CD14-positive monocyte (primary cell): ENCODE measurements at regions of chr19 and their contacts with region 1.

Region 1: DNA sequence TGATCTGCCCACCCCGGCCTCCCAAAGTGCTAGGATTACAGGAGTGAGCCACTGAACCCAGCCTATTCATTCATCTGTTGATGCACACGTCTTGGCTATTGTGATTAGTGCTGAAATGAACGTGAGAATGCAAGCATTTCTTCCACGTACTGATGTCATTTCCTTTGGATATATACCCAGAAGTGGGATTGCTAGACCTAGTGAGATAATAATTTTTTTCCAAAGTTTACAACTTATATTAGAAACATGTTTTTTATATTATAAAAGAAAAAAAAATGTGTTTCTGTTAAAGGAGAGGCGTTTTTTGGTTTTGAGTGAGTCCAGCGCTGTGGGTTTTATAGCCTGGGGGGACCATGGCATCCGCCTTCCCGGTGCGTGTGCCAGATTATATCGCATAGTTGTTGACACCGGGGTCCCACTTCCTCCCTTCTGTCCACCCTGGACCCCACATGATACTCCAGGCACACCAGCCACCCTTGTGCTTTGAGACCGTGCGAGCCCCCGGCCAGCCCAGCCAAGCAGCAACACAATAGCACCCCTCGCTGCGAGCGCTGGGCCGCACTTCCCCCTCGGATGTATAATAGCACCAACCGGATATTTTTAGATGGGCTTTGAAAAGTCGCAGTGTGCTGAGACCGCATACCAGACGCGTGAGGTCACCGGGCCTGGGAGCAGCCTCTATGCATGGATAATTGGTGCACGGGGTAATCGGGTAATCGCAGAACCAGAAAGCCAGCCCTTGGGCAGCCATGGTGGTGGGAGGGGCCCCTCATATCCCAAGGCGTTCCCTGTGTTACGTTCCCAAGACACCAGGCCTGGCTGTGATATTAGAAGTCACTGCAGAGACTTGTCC is 59.6 kb downstream of the MYO9B start:
- DNase-seq: peak; percentile 63 to 69 (median 64)
- H3K4me3 ChIP-seq: peak overlapping the region in 1 of 3 experiments; percentile 20
- H3K4me3 Mint-ChIP-seq: peak overlapping the region; percentile 72 to 82
- H3K27ac ChIP-seq: peak overlapping the region; percentile 55 to 74
- H3K27ac Mint-ChIP-seq: peak overlapping the region; percentile 66 to 96 (median 90)
- H3K4me1 ChIP-seq: peaks cover 23 to 26% of the 10 kb centered on the region in 2 donors
- H3K4me1 Mint-ChIP-seq: peaks cover 47% of the 10 kb centered on the region
- H3K27me3 ChIP-seq: no peaks in the 10 kb centered on the region
- H3K27me3 Mint-ChIP-seq: peaks cover 0 to 1% (median 0%) of the 10 kb centered on the region in 3 donors
- CTCF ChIP-seq: no peak

Region 2: DNA sequence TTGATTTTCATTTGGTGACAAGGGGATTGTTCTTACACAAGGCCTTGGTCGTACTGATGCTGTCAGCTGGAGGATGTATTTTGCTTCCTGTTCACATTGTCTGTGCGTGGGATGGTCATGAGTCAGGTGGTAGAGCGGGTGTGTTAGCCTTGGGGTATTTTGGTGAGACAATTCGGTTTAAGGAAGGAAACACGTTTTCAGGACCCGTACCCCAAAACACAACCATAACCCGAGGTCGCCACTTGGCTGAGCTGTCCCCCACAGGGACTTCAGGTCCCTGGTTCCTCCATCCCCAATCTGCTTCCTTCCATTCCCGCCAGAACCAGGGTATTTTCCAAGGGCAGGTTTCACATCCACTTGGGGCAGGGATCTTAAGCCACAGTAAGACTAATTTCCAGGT is 44.6 kb before region 1 on chr19:
- intact Hi-C with region 1: loop called in 1 of 2 experiments (anchors 5 kb)
- DNase-seq: peak; percentile 94 to 99 (median 96)
- H3K4me3 ChIP-seq: peak overlapping the region in 1 of 3 experiments; percentile 6
- H3K4me3 Mint-ChIP-seq: peak overlapping the region in 1 of 2 donors; percentile 77
- H3K27ac ChIP-seq: peak overlapping the region; percentile 96 to 100
- H3K27ac Mint-ChIP-seq: peak overlapping the region; percentile 96 to 100 (median 99)
- H3K4me1 ChIP-seq: peaks cover 60 to 74% of the 10 kb centered on the region in 2 donors
- H3K4me1 Mint-ChIP-seq: peaks cover 73% of the 10 kb centered on the region
- H3K27me3 ChIP-seq: no peaks in the 10 kb centered on the region
- H3K27me3 Mint-ChIP-seq: peaks cover 0 to 6% (median 2%) of the 10 kb centered on the region in 3 donors
- CTCF ChIP-seq: peak; percentile 24

Region 3: DNA sequence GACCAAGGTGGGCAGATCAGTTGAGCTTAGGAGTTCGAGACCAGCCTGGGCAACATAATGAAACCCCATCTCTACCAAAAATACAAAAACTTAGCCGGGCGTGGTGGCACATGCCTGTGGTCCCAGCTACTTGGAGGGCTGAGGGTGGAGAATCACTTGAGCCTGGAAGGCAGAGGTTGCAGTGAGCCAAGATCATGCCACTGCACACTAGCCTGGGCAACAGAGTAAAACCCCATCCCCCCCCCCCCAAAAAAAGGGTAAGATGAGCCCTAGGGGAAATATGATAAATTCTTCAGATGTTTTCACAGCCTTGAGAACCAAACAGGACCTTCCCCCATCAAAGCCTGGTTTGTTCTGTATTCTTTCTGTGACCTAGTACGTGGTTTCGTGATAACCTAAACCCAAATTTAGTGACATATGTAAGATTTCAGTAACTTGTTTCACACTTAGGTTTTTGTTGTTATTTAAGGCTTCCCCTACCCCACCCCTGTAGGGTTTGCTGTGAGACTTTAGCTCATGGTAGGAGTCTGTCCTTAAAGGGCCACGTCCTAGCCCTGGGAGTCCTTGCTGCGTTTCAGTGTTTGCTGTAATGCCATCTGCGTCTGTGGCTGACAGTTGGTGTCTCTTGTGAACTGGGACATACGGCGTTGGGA is 10.0 kb before region 1 on chr19:
- intact Hi-C with region 1: no loop called
- DNase-seq: peak in 2 of 3 donors; percentile 49 to 61
- H3K4me3 ChIP-seq: peak overlapping the region in 2 of 3 experiments; percentile 7 to 68
- H3K4me3 Mint-ChIP-seq: peak overlapping the region; percentile 75 to 90
- H3K27ac ChIP-seq: peak overlapping the region; percentile 92 to 100
- H3K27ac Mint-ChIP-seq: peak overlapping the region; percentile 99 to 100 (median 99)
- H3K4me1 ChIP-seq: peaks cover 52 to 61% of the 10 kb centered on the region in 2 donors
- H3K4me1 Mint-ChIP-seq: peaks cover 63% of the 10 kb centered on the region
- H3K27me3 ChIP-seq: no peaks in the 10 kb centered on the region
- H3K27me3 Mint-ChIP-seq: peaks cover 0 to 4% (median 0%) of the 10 kb centered on the region in 3 donors
- CTCF ChIP-seq: no peak